ENCODE measurements at regions of chr2 and their contacts with region 1.

Region 1: DNA sequence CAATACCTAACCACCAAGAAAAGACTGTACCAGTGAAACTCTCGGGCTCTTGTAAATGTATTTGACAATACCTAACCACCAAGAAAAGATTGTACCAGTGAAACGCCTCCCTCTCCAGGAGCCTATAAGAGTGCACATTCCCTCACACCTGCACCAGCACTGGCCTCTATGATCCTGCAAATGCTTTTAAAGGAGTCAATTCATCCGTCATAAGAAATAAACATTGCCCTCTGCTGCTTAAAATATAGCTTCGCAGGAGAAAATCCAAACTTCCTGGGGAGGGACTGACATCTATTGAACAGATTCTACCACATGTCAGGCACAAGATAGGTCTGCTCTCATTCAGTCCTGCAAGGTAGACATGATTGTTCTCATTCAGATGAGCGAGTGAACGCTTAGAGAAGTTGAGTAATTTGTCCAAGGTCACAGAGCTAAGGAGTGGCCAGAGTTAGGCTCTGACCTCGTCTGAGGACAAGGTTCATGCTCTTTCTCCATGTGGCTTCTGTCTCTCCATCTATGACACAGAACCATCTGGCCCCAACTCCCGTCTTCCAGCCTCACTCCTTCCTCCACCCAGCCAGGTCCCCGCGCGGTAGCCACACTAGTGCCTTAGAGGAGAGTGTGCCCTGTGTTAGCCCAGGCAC is 38.7 kb downstream of the MCFD2 start:
- DNase-seq: peak; percentile 80
- H3K4me3 ChIP-seq: no peak overlapping the region
- H3K27ac ChIP-seq: no peak overlapping the region
- H3K4me1 ChIP-seq: peaks cover 31% of the 10 kb centered on the region
- H3K27me3 ChIP-seq: no peaks in the 10 kb centered on the region
- CTCF ChIP-seq: peak; percentile 38 to 41
- POLR2A ChIP-seq: no peak

Region 2: GRCh38 chr2:45993476-45993991 is 883.3 kb before region 1 on chr2:
- CTCF ChIA-PET with region 1: no interaction called
- POLR2A ChIA-PET with region 1: no interaction called
- dilution Hi-C with region 1: no loop called
- intact Hi-C with region 1: loop called (anchors 10 kb)
- DNase-seq: peak; percentile 75
- H3K4me3 ChIP-seq: no peak overlapping the region
- H3K27ac ChIP-seq: no peak overlapping the region
- H3K4me1 ChIP-seq: no peaks in the 10 kb centered on the region
- H3K27me3 ChIP-seq: no peaks in the 10 kb centered on the region
- CTCF ChIP-seq: peak; percentile 72 to 74
- POLR2A ChIP-seq: no peak

Region 3: GRCh38 chr2:46650556-46651001 is 226.3 kb before region 1 on chr2:
- CTCF ChIA-PET with region 1: interaction called, 15 read pairs
- POLR2A ChIA-PET with region 1: no interaction called
- dilution Hi-C with region 1: no loop called
- intact Hi-C with region 1: loop called (anchors 2 kb)
- DNase-seq: peak; percentile 80
- H3K4me3 ChIP-seq: no peak overlapping the region
- H3K27ac ChIP-seq: no peak overlapping the region
- H3K4me1 ChIP-seq: peaks cover 4% of the 10 kb centered on the region
- H3K27me3 ChIP-seq: no peaks in the 10 kb centered on the region
- CTCF ChIP-seq: peak; percentile 81 to 83
- POLR2A ChIP-seq: no peak

Region 4: GRCh38 chr2:46803911-46804670 is 72.8 kb before region 1 on chr2:
- CTCF ChIA-PET with region 1: interaction called, 25 read pairs
- POLR2A ChIA-PET with region 1: no interaction called
- dilution Hi-C with region 1: no loop called
- intact Hi-C with region 1: no loop called
- DNase-seq: no peak
- H3K4me3 ChIP-seq: no peak overlapping the region
- H3K27ac ChIP-seq: no peak overlapping the region
- H3K4me1 ChIP-seq: peaks cover 8% of the 10 kb centered on the region
- H3K27me3 ChIP-seq: no peaks in the 10 kb centered on the region
- CTCF ChIP-seq: no peak
- POLR2A ChIP-seq: no peak

Region 5: GRCh38 chr2:46854261-46854660 is 22.6 kb before region 1 on chr2:
- CTCF ChIA-PET with region 1: interaction called, 6 read pairs
- POLR2A ChIA-PET with region 1: no interaction called
- dilution Hi-C with region 1: no loop called
- intact Hi-C with region 1: loop called (anchors 2 kb)
- DNase-seq: peak; percentile 72
- H3K4me3 ChIP-seq: no peak overlapping the region
- H3K27ac ChIP-seq: peak overlapping the region; percentile 75
- H3K4me1 ChIP-seq: peaks cover 50% of the 10 kb centered on the region
- H3K27me3 ChIP-seq: no peaks in the 10 kb centered on the region
- CTCF ChIP-seq: no peak
- POLR2A ChIP-seq: no peak